ENCODE measurements at regions of chr3 and their contacts with region 1.

Region 1: GRCh38 chr3:188788621-188789081 is 383.1 kb upstream of the TPRG1 start:
- DNase-seq: peak; percentile 88
- H3K4me3 Mint-ChIP-seq: no peak overlapping the region
- H3K27ac Mint-ChIP-seq: no peak overlapping the region
- H3K4me1 Mint-ChIP-seq: peaks cover 2% of the 10 kb centered on the region
- H3K27me3 Mint-ChIP-seq: no peaks in the 10 kb centered on the region

Region 2: GRCh38 chr3:187974871-187975271 is 813.8 kb before region 1 on chr3:
- CTCF ChIA-PET with region 1: no interaction called
- POLR2A ChIA-PET with region 1: no interaction called
- intact Hi-C with region 1: loop called (anchors 1 kb)
- DNase-seq: no peak
- H3K4me3 Mint-ChIP-seq: peak overlapping the region; percentile 62
- H3K27ac Mint-ChIP-seq: peak overlapping the region; percentile 92
- H3K4me1 Mint-ChIP-seq: peaks cover 63% of the 10 kb centered on the region
- H3K27me3 Mint-ChIP-seq: no peaks in the 10 kb centered on the region

Region 3: GRCh38 chr3:188294823-188295487 is 493.7 kb before region 1 on chr3:
- CTCF ChIA-PET with region 1: no interaction called
- POLR2A ChIA-PET with region 1: no interaction called
- intact Hi-C with region 1: loop called (anchors 1 kb)
- DNase-seq: no peak
- H3K4me3 Mint-ChIP-seq: no peak overlapping the region
- H3K27ac Mint-ChIP-seq: peak overlapping the region; percentile 72
- H3K4me1 Mint-ChIP-seq: peaks cover 79% of the 10 kb centered on the region
- H3K27me3 Mint-ChIP-seq: no peaks in the 10 kb centered on the region

Region 4: GRCh38 chr3:188683032-188683521 is 105.6 kb before region 1 on chr3:
- CTCF ChIA-PET with region 1: no interaction called
- POLR2A ChIA-PET with region 1: no interaction called
- intact Hi-C with region 1: loop called (anchors 1 kb)
- DNase-seq: peak; percentile 74
- H3K4me3 Mint-ChIP-seq: no peak overlapping the region
- H3K27ac Mint-ChIP-seq: peak overlapping the region; percentile 40
- H3K4me1 Mint-ChIP-seq: peaks cover 41% of the 10 kb centered on the region
- H3K27me3 Mint-ChIP-seq: no peaks in the 10 kb centered on the region

Region 5: GRCh38 chr3:188830893-188831292 is 42.2 kb after region 1 on chr3:
- CTCF ChIA-PET with region 1: no interaction called
- POLR2A ChIA-PET with region 1: no interaction called
- intact Hi-C with region 1: loop called (anchors 1 kb)
- DNase-seq: no peak
- H3K4me3 Mint-ChIP-seq: no peak overlapping the region
- H3K27ac Mint-ChIP-seq: no peak overlapping the region
- H3K4me1 Mint-ChIP-seq: peaks cover 31% of the 10 kb centered on the region
- H3K27me3 Mint-ChIP-seq: no peaks in the 10 kb centered on the region

Region 6: DNA sequence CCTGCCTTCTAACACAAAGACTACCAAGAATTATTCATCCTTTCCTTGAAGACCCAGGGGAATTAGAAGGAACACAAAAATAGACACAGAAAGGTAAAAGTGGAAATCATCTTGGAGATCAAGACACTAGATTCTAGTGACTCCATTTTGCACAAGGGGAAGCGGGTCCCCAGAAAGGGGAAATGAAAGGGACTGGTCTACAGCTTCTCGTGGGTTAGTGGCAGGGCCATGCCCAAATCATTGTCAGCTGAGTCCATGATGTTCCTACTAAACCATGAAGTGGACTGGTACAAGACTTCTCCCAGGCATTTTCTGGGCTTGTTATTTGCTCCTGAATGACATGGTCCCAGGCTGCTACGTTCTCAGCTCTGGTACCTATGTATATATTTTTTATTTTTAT is 152.5 kb after region 1 on chr3:
- CTCF ChIA-PET with region 1: no interaction called
- POLR2A ChIA-PET with region 1: no interaction called
- intact Hi-C with region 1: no loop called
- DNase-seq: no peak
- H3K4me3 Mint-ChIP-seq: no peak overlapping the region
- H3K27ac Mint-ChIP-seq: no peak overlapping the region
- H3K4me1 Mint-ChIP-seq: peaks cover 3% of the 10 kb centered on the region
- H3K27me3 Mint-ChIP-seq: peaks cover 6% of the 10 kb centered on the region

Region 7: DNA sequence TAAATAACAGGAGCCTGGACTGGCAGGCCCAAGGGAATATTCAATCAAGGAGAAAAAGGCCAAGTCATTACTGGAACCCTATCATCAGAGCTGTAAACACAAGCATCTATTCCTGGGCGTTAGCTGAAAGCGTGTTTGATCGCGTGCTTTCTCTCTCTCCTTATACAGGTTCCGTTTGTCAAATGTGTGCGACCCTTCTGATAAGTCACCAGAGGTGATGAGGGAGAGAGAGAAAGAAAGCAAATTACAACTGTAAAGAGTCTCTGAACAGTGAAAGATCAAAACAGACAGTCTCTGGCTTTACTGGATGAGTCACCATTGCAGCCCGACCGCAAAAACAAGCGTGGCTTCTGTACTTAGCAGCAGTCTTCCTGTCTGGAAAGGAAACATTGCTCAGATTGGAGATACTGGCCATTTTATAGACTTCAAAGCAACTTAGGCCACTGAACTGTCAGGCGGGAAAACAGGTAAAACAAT is 343.6 kb after region 1 on chr3:
- CTCF ChIA-PET with region 1: no interaction called
- POLR2A ChIA-PET with region 1: no interaction called
- intact Hi-C with region 1: loop called (anchors 2 kb)
- DNase-seq: peak; percentile 90
- H3K4me3 Mint-ChIP-seq: peak overlapping the region; percentile 50
- H3K27ac Mint-ChIP-seq: peak overlapping the region; percentile 83
- H3K4me1 Mint-ChIP-seq: peaks cover 26% of the 10 kb centered on the region
- H3K27me3 Mint-ChIP-seq: no peaks in the 10 kb centered on the region